Mammary epithelial cell (primary cell): ENCODE measurements at regions of chr2 and their contacts with region 1.

Region 1: DNA sequence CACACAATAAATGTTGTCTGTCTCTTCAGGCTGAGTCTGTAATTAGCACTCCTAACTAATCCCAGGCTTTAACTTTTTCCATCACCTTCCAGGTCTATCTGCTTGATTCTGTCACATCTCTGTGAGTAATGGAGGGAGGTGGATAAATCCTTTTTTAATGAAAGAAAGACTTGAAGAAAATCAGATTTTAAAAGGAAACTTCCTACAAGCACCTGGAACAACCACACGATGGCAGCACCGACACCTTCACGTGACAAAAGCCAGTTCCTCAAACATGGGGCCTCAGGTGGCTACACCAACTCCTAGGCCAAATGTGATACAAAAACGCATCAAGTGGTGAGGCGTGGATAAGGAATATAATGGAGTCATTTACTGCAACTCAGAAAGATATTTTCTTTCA is 41.8 kb downstream of the TGFBRAP1 start:
- DNase-seq: peak; percentile 29
- H3K4me3 ChIP-seq: no peak overlapping the region
- H3K27ac ChIP-seq: no peak overlapping the region
- H3K4me1 ChIP-seq: peaks cover under 1% of the 10 kb centered on the region
- H3K27me3 ChIP-seq: no peaks in the 10 kb centered on the region
- CTCF ChIP-seq: peak; percentile 60 to 66

Region 2: DNA sequence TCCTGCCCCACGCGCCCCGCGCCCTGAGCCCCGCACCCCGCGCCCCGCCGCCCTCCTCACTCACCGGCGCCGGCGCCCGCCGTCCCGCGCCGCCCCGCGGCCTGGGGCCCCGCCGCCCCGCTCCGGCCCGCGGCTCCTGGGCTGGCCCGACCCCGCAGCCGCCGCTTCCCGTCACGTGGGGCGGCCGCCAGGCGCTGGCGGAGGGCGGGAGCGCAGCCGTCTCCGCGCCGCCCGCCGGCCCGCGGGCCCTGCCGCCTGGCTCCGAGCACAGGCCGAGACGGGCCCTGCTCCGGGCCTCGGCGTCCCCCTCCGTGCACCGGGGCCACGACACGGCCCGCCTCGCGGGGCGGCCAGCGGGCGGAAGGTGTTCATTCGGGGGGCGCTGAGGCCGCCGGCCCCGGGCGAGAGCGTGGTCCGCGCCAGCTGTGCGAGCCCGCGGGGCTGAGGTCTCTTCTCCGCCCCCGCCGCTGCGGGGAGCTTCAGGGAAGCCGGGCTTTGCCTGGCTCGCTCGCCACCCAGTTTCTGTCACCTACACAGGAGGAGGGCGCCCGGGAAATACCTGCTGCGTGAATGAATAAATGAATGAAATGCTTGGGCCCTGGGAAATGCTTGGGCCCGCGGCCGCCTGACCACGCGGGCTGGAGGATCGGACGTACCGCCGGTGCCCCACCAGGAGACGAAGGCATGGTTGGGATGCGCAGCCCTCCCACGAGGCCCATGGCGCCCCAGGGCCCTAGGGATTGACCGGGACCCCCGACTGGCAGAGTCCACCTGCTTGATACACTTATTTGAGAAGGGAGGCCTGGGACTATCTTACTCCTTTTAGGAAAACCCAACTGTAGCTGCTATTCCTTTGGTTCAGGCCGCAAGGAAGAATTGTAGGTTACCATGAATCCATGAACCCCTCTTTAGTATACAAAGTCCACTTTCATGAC is 42.1 kb after region 1 on chr2 and contains the start of gene TGFBRAP1:
- CTCF ChIA-PET with region 1: no interaction called
- dilution Hi-C with region 1: no loop called
- in situ Hi-C with region 1: no loop called
- intact Hi-C with region 1: loop called (anchors 2 kb)
- DNase-seq: peak; percentile 27
- H3K4me3 ChIP-seq: peak within 1 kb of the TSS; percentile 47 to 65 (median 63)
- H3K27ac ChIP-seq: peak within 1 kb of the TSS; percentile 68
- H3K4me1 ChIP-seq: peaks cover 31% of the 10 kb centered on the region
- H3K27me3 ChIP-seq: no peaks in the 10 kb centered on the region
- CTCF ChIP-seq: no peak
- total RNA-seq, gene TGFBRAP1: 24.6 to 44.8 TPM